Activated T-helper 1 cell treated with anti-CD3 and anti-CD28 coated beads, Interleukin-12 subunit alpha, Interleukin-12 subunit beta, Interleukin-2, Interleukin-4 antibody, amounts not matched to agents 30 ng/mL and 10 ng/mL and 1 ng/mL, durations not matched to agents 14 hours and 24 hours and 36 hours (primary cell): ENCODE measurements at regions of chr2 and their contacts with region 1.

Region 1: GRCh38 chr2:29130295-29130694 is 15.1 kb downstream of the CLIP4 start:
- DNase-seq: no peak
- H3K4me3 Mint-ChIP-seq: peak overlapping the region; percentile 56
- H3K27ac Mint-ChIP-seq: peak overlapping the region; percentile 35
- H3K4me1 Mint-ChIP-seq: peaks cover 31% of the 10 kb centered on the region
- H3K27me3 Mint-ChIP-seq: no peaks in the 10 kb centered on the region

Region 2: GRCh38 chr2:29014811-29015421 is 115.4 kb before region 1 on chr2:
- intact Hi-C with region 1: loop called (anchors 1 kb)
- DNase-seq: peak; percentile 65
- H3K4me3 Mint-ChIP-seq: peak overlapping the region; percentile 88
- H3K27ac Mint-ChIP-seq: peak overlapping the region; percentile 99
- H3K4me1 Mint-ChIP-seq: peaks cover 65% of the 10 kb centered on the region
- H3K27me3 Mint-ChIP-seq: peaks cover 2% of the 10 kb centered on the region

Region 3: GRCh38 chr2:29314816-29315571 is 184.7 kb after region 1 on chr2:
- intact Hi-C with region 1: loop called (anchors 2 kb)
- DNase-seq: peak; percentile 61
- H3K4me3 Mint-ChIP-seq: peak overlapping the region; percentile 66
- H3K27ac Mint-ChIP-seq: peak overlapping the region; percentile 86
- H3K4me1 Mint-ChIP-seq: peaks cover 65% of the 10 kb centered on the region
- H3K27me3 Mint-ChIP-seq: peaks cover 9% of the 10 kb centered on the region

Region 4: DNA sequence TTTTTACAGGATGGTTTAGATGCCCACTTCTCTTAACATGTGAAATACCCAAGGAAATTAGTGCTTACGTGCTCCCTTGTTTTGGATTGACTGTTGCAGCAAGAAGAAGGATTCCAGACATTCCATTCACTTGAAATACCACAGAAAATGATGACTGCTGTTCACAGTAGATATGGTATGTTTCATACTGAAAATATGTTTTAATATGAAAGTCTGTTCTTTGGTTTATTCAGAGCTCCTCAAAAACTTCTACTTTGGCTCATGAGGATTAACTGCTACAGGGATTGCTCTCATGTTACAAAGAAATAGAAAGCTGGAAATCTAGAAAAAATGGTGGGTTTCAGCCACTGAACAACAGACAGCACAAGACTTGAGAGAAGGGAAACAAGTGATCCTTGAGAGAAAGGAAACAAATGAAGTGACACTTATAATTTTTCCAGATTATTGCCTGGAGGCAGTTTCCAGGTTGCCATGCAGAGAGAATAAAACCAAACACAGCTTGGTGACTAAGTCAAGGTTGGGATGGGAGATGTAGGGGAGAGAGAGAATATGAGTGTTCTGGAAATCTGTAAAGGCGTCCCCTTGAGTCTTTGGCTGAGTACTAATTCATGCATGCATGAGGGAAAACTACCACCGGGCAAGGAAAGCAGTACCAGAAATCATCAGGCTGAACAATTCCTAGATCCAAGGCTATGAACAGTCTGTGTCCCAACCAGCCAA is 333.0 kb after region 1 on chr2:
- intact Hi-C with region 1: no loop called
- DNase-seq: no peak
- H3K4me3 Mint-ChIP-seq: no peak overlapping the region
- H3K27ac Mint-ChIP-seq: no peak overlapping the region
- H3K4me1 Mint-ChIP-seq: no peaks in the 10 kb centered on the region
- H3K27me3 Mint-ChIP-seq: peaks cover 9% of the 10 kb centered on the region